ENCODE measurements at regions of chr19 and their contacts with region 1.

Region 1: GRCh38 chr19:3429581-3430080 is 50.7 kb downstream of the SMIM24 start:
- DNase-seq: peak; percentile 46 to 98
- H3K4me3 ChIP-seq: no peak overlapping the region
- H3K27ac ChIP-seq: no peak overlapping the region
- H3K4me1 ChIP-seq: peaks cover 0 to 6% (median 3%) of the 10 kb centered on the region in 4 experiments; a peak in 4 of 7 replicates
- H3K27me3 ChIP-seq: peaks cover 0 to 3% (median 1%) of the 10 kb centered on the region in 4 experiments; a peak in 3 of 7 replicates
- CTCF ChIP-seq: peak; percentile 92 to 96 (median 92)
- EP300 ChIP-seq: no peak
- POLR2A ChIP-seq: no peak
- RAD21 ChIP-seq: peak; percentile 85 to 88

Region 2: DNA sequence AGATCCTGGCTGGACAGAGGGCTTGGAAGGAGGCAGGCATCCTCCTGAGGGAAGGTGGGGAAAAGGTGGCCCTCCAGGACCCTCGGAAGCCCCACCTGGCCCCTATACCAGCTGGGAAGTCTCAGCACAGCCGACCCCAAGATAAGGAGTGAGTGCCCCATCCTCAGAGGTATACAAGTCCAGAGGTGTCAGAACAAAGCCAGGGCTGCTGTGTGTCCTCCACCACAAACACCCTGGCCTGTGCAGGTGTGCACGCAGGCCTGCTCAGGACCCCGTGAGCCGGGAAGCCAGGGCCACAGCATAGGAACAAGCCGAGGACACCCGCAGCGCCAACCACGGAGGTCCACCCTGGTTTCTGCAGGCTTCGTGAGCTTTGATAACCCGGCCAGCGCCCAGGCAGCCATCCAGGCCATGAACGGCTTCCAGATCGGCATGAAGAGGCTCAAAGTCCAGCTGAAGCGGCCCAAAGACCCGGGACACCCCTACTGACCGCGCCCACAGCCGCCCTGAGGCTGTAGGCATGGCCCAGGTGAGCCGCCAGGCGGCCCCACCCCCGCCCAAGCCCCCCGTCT is 136.6 kb before region 1 on chr19:
- CTCF ChIA-PET with region 1: no interaction called
- POLR2A ChIA-PET with region 1: no interaction called
- DNase-seq: no peak
- H3K4me3 ChIP-seq: no peak overlapping the region
- H3K27ac ChIP-seq: no peak overlapping the region; the same call in 1 of the 2 replicates
- H3K4me1 ChIP-seq: peaks cover 0 to 4% (median 3%) of the 10 kb centered on the region in 4 experiments; a peak in 5 of 7 replicates
- H3K27me3 ChIP-seq: no peaks in the 10 kb centered on the region
- CTCF ChIP-seq: no peak
- EP300 ChIP-seq: no peak
- POLR2A ChIP-seq: no peak
- RAD21 ChIP-seq: no peak

Region 3: DNA sequence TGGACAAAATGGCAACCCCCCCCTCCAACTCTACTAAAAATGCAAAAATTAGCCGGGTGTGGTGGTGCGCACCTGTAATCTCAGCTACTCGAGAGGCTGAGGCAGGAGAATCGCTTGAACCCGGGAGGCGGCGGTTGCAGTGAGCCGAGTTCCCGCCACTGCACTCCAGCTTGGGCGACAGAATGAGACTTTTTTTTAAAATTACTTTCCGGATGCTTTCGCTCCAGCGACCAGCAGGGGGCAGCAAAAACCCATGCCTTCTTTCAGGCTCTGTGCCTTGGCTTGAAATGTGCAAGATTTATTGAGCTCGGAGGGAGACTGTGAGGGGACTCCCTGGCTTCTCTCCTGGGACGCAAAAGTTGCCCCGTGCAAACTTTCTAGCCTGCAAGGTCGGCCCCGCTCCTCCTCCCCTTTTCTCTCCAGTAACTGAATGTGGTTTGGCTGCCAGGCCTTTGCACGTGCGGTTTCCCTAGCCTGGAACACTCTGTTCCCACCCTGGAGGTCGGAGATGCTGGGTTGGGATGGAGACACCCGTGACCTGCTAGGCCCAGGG is 124.7 kb before region 1 on chr19:
- CTCF ChIA-PET with region 1: interaction called, 12 read pairs
- POLR2A ChIA-PET with region 1: no interaction called
- DNase-seq: peak in 1 of 2 experiments; percentile 92
- H3K4me3 ChIP-seq: no peak overlapping the region
- H3K27ac ChIP-seq: no peak overlapping the region
- H3K4me1 ChIP-seq: no peaks in the 10 kb centered on the region
- H3K27me3 ChIP-seq: peaks cover 0 to 8% (median 4%) of the 10 kb centered on the region in 4 experiments; a peak in 4 of 7 replicates
- CTCF ChIP-seq: peak; percentile 66 to 76 (median 71)
- EP300 ChIP-seq: no peak
- POLR2A ChIP-seq: no peak
- RAD21 ChIP-seq: peak; percentile 74 to 79

Region 4: GRCh38 chr19:3324321-3324856 is 105.2 kb before region 1 on chr19:
- CTCF ChIA-PET with region 1: interaction called, 45 read pairs
- POLR2A ChIA-PET with region 1: no interaction called
- DNase-seq: peak in 1 of 2 experiments; percentile 94
- H3K4me3 ChIP-seq: no peak overlapping the region
- H3K27ac ChIP-seq: no peak overlapping the region
- H3K4me1 ChIP-seq: no peaks in the 10 kb centered on the region
- H3K27me3 ChIP-seq: no peaks in the 10 kb centered on the region; a peak in 1 of 7 replicates
- CTCF ChIP-seq: peak; percentile 76 to 93 (median 92)
- EP300 ChIP-seq: no peak
- POLR2A ChIP-seq: no peak
- RAD21 ChIP-seq: peak; percentile 24 to 54; a peak in 3 of 4 replicates

Region 5: DNA sequence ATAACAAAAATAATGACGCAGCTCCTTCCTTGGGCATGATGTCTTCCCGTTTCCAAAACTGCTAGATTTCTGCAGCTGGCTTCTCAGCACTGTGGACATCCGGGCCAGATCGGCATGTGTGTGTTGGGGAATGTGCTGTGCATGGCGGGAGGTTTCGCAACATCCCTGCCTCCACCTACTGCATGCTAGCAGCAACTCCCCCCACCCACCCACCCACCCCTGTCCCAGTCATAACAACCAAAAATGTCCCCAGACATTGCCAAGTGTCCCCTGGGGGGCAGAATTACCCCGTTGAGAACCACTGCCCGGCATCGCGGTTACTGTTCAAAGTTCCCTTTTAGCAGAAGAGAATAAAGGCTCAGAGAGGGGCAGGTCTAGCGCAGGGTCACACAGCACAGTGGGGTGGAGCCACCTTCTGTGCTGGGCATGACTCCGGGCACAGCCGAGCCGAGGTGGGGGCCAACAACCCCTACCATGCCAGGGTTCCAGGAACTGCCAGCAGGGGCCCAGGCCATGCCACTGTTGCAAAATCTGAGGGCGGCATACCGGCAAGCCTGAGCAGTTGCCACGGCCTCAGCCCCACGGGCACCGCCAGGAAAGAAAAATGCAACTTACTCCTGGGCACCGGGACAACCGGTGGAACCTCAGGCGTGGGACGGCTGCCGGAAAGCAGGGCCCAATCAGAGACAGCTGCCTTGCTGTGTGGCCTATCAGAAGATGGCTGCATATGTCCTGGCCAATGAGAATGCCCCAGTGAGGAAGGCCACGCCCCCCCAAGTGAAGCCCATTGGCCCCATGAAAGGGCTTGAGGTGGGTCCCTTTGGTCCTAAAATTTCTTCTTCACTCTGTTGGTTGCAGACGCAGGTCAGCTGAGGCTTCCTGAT is 85.8 kb before region 1 on chr19:
- CTCF ChIA-PET with region 1: interaction called, 77 read pairs
- POLR2A ChIA-PET with region 1: interaction called, 4 read pairs
- DNase-seq: no peak
- H3K4me3 ChIP-seq: no peak overlapping the region
- H3K27ac ChIP-seq: no peak overlapping the region
- H3K4me1 ChIP-seq: no peaks in the 10 kb centered on the region
- H3K27me3 ChIP-seq: peaks cover 0 to 2% (median 0%) of the 10 kb centered on the region in 4 experiments; a peak in 3 of 7 replicates
- CTCF ChIP-seq: no peak
- EP300 ChIP-seq: no peak
- POLR2A ChIP-seq: no peak
- RAD21 ChIP-seq: no peak

Region 6: GRCh38 chr19:3387645-3388589 is 41.7 kb before region 1 on chr19:
- CTCF ChIA-PET with region 1: interaction called, 13 read pairs
- POLR2A ChIA-PET with region 1: no interaction called
- DNase-seq: no peak
- H3K4me3 ChIP-seq: no peak overlapping the region
- H3K27ac ChIP-seq: no peak overlapping the region
- H3K4me1 ChIP-seq: peaks cover 0 to 16% (median 6%) of the 10 kb centered on the region in 4 experiments; a peak in 6 of 7 replicates
- H3K27me3 ChIP-seq: 0 out of 7 replicates have a peak, but pooled peaks cover 0 to 2% (median 0%) of the 10 kb centered on the region in 4 experiments
- CTCF ChIP-seq: no peak
- EP300 ChIP-seq: no peak
- POLR2A ChIP-seq: no peak
- RAD21 ChIP-seq: no peak

Region 7: DNA sequence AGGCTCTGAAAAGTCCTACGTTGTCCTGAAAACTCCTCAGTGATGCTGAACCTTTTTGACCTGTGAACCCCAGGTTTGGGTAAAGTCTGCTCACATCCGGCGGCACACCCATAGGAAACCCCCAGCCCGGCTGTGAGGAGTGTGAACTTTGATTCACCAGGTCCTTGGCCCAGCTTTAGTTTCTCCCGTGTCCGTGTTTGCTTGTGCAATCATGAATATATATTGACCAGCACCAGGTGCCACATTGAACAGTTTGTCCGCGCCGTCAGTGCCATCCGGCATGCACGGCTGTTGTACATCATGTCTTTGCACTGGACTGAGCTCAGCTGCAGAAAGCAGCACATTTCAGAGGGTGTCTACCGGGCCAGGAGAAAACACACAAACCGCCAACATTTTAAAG is 18.0 kb before region 1 on chr19:
- CTCF ChIA-PET with region 1: interaction called, 11 read pairs
- POLR2A ChIA-PET with region 1: interaction called, 3 read pairs
- DNase-seq: no peak
- H3K4me3 ChIP-seq: no peak overlapping the region
- H3K27ac ChIP-seq: no peak overlapping the region
- H3K4me1 ChIP-seq: peaks cover 0 to 3% (median 0%) of the 10 kb centered on the region in 4 experiments; a peak in 3 of 7 replicates
- H3K27me3 ChIP-seq: no peaks in the 10 kb centered on the region
- CTCF ChIP-seq: no peak
- EP300 ChIP-seq: no peak
- POLR2A ChIP-seq: no peak
- RAD21 ChIP-seq: no peak

Region 8: DNA sequence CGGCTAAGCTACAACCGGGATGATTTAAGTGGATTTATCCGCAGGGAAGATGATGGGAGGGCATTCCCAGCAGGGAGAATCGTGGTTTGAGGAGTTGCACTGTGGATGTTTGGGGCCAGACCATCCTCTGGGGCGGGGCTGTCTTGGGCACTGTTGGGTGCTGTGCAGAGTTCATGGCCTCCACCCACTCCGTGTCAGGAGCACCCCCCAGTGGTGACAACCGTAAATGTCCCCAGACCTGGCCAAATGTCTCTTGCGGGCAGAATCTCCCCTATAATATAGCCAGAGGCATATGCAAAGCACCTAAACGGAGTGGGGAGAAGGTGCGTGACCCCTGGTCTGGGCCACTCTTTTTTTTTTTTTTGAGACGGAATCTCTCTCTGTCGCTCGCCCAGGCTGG is 10.5 kb after region 1 on chr19:
- CTCF ChIA-PET with region 1: interaction called, 24 read pairs
- POLR2A ChIA-PET with region 1: interaction called, 6 read pairs
- DNase-seq: peak in 1 of 2 experiments; percentile 92
- H3K4me3 ChIP-seq: no peak overlapping the region
- H3K27ac ChIP-seq: no peak overlapping the region
- H3K4me1 ChIP-seq: peaks cover 3 to 15% (median 10%) of the 10 kb centered on the region in 4 experiments
- H3K27me3 ChIP-seq: no peaks in the 10 kb centered on the region
- CTCF ChIP-seq: peak; percentile 78 to 83 (median 78)
- EP300 ChIP-seq: no peak
- POLR2A ChIP-seq: no peak
- RAD21 ChIP-seq: peak; percentile 84 to 87

Region 9: DNA sequence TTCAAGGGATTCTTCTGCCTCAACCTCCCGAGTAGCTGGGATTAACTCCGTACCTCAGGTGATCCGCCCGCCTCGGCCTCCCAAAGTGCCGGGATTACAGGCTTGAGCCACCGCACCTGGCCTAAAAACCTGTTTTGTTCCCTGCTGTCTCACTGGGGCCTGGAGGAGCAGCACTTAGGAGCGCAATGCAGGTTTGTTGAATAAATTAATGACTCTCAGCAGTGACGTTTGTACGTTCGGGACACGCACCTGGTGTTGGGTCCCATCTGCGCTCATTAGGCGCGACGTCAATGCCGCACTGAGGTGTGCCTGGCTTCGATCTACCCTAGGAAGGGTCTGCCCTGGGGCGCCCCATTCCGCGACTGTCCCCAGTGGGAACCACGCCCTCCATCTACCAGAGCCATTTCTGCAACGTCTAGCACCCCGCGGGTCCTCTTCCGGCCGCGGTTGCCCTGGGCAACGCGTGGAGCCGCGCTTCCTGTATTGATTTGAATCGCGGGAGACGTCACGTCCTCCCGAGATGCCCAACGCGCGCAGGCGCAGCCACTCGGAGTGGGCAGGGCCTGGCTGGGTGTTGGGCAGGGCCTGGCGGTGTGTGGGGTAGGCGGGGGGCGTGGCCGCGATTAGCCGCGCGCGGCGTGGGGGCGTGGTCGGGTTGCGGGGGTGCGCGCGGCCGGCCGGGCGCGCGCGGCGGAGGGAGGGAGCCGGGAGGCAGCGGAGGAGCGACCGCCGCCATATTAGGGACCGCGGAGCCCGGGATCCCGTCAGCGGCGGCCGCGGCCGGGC is 76.2 kb after region 1 on chr19 and contains the start of gene FZR1:
- CTCF ChIA-PET with region 1: no interaction called
- POLR2A ChIA-PET with region 1: no interaction called
- DNase-seq: peak; percentile 93 to 98
- H3K4me3 ChIP-seq: peak within 1 kb of the TSS; percentile 44 to 98 (median 58)
- H3K27ac ChIP-seq: peak within 1 kb of the TSS; percentile 90
- H3K4me1 ChIP-seq: peaks cover 0 to 9% (median 7%) of the 10 kb centered on the region in 4 experiments; a peak in 3 of 7 replicates
- H3K27me3 ChIP-seq: no peaks in the 10 kb centered on the region
- CTCF ChIP-seq: no peak
- EP300 ChIP-seq: peak in 1 of 2 experiments; percentile 16; a peak in 1 of 3 replicates
- POLR2A ChIP-seq: peak in 1 of 2 experiments; percentile 59; a peak in 1 of 3 replicates
- RAD21 ChIP-seq: no peak
- total RNA-seq, gene FZR1: 35.5 and 36.9 TPM in 2 replicates

Region 10: GRCh38 chr19:3520166-3521103 is 90.8 kb after region 1 on chr19:
- CTCF ChIA-PET with region 1: no interaction called
- POLR2A ChIA-PET with region 1: no interaction called
- DNase-seq: no peak
- H3K4me3 ChIP-seq: no peak overlapping the region
- H3K27ac ChIP-seq: no peak overlapping the region
- H3K4me1 ChIP-seq: peaks cover 0 to 29% (median 20%) of the 10 kb centered on the region in 4 experiments; a peak in 6 of 7 replicates
- H3K27me3 ChIP-seq: no peaks in the 10 kb centered on the region
- CTCF ChIP-seq: peak; percentile 33 to 42 (median 41)
- EP300 ChIP-seq: no peak
- POLR2A ChIP-seq: no peak
- RAD21 ChIP-seq: peak; percentile 25 to 42; a peak in 3 of 4 replicates

Region 11: DNA sequence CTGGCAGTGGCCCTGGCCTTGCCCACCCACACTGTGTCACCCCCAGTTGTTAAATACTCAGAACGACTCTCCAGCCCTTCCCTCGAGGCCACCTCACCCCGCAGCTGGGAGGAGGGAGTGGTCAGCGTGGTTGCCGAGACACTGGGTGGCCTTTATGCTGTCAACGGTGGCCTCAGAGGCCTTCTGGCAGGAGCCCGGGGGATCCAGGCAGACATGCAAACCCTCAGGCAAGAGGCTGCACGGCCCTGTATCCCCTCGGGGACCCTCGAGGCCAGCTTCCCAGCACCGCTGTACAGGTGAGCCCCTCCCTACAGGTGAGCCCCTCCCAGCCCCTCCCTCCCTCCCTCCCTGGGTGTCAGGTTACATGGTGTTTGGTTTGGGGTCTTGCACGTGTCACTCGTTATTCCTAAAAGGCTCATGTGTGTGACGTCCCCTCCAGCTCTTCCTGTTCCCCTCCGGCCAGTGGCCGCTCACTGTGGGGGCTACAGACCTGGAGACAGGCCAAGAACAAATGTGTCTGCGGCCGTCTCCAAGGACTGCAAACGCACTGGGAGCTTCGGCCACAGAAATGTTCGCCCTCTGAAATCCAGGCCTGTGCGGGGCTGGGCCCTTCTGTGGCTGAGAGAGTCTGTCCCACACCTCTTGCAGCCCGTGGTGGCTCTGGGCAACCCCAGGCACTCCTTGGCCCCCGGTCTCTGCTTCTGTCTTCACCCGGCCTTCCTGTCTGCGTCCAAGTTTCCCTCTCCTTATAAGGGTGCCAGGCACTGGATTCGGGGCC is 109.5 kb after region 1 on chr19 and contains the start of gene TEKTIP1:
- CTCF ChIA-PET with region 1: no interaction called
- POLR2A ChIA-PET with region 1: no interaction called
- DNase-seq: peak in 1 of 2 experiments; percentile 66
- H3K4me3 ChIP-seq: no peak within 1 kb of the TSS
- H3K27ac ChIP-seq: no peak within 1 kb of the TSS
- H3K4me1 ChIP-seq: peaks cover 3 to 11% (median 6%) of the 10 kb centered on the region in 4 experiments; a peak in 6 of 7 replicates
- H3K27me3 ChIP-seq: no peaks in the 10 kb centered on the region
- CTCF ChIP-seq: no peak
- EP300 ChIP-seq: no peak
- POLR2A ChIP-seq: no peak
- RAD21 ChIP-seq: no peak
- total RNA-seq, gene TEKTIP1: 1.0 and 1.1 TPM in 2 replicates